ENCODE measurements at regions of chr17 and their contacts with region 1.

Region 1: GRCh38 chr17:49230636-49231562 is at the start of gene PHOSPHO1:
- DNase-seq: peak; percentile 97
- total RNA-seq, gene PHOSPHO1: 3.8 TPM

Region 2: DNA sequence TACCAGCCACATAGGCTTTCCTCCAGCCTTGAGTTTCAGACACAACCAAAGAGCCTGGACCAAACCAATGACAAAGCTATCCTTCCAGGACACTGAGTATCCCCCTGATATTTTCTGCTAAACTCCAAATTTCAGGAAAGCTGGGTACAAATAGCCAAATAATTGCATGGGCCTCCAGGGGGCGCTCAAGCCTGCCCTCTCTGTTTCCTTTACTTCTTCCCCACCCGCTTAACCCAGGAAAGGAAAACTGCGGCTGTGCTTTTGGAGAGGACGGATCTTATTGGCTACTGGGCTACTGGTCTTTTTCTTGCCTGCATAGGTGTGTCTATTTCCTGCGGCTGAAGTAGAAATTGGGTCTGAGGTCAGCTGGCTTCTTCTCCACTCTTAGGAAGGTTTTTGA is 50.6 kb before region 1 on chr17:
- intact Hi-C with region 1: no loop called
- DNase-seq: peak; percentile 81

Region 3: DNA sequence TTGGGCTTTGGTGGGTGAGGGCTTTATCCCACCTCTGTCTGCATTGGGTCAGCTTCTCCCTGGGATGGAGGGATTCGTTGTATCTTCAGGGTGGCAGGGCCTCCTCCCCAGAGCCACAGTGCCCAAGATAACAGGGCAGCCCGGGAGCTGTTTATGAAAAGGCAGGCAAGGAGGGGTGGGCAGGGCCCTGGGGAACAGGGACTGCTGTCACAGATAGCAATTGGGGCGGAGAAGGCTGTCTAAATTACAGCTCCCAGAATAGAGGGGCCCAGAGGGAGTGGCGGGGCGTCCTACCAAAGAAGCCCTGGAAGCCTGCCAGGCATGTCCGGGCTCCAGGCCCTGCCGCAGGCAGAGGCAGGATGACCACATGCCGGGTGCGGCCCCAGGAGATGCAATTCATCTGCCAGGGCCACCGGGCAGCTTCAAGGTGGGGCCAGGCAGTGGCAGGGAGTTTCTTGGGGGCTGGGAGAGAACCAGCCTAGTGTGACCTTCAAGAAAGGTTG is 18.4 kb after region 1 on chr17:
- intact Hi-C with region 1: loop called (anchors 2 kb)
- DNase-seq: peak; percentile 88

Region 4: GRCh38 chr17:49260011-49260921 is 29.4 kb after region 1 on chr17:
- intact Hi-C with region 1: loop called (anchors 5 kb)
- DNase-seq: peak; percentile 92

Region 5: GRCh38 chr17:49290690-49291359 is 59.9 kb after region 1 on chr17:
- intact Hi-C with region 1: loop called (anchors 2 kb)
- DNase-seq: peak; percentile 7